ENCODE measurements at regions of chr1 and their contacts with region 1.

Region 1: GRCh38 chr1:93814059-93814794 is 64.8 kb downstream of the DNTTIP2 start:
- DNase-seq: peak; percentile 69
- ATAC-seq: peak; percentile 76
- H3K4me3 Mint-ChIP-seq: no peak overlapping the region
- H3K27ac Mint-ChIP-seq: no peak overlapping the region
- H3K4me1 Mint-ChIP-seq: peaks cover 17% of the 10 kb centered on the region
- H3K27me3 Mint-ChIP-seq: no peaks in the 10 kb centered on the region
- CTCF ChIP-seq: peak; percentile 84

Region 2: GRCh38 chr1:93437976-93438605 is 376.1 kb before region 1 on chr1:
- CTCF ChIA-PET with region 1: interaction called, 5 read pairs
- POLR2A ChIA-PET with region 1: no interaction called
- intact Hi-C with region 1: loop called (anchors 10 kb)
- DNase-seq: no peak
- ATAC-seq: peak; percentile 27
- H3K4me3 Mint-ChIP-seq: no peak overlapping the region
- H3K27ac Mint-ChIP-seq: no peak overlapping the region
- H3K4me1 Mint-ChIP-seq: no peaks in the 10 kb centered on the region
- H3K27me3 Mint-ChIP-seq: peaks cover 6% of the 10 kb centered on the region
- CTCF ChIP-seq: peak; percentile 66

Region 3: DNA sequence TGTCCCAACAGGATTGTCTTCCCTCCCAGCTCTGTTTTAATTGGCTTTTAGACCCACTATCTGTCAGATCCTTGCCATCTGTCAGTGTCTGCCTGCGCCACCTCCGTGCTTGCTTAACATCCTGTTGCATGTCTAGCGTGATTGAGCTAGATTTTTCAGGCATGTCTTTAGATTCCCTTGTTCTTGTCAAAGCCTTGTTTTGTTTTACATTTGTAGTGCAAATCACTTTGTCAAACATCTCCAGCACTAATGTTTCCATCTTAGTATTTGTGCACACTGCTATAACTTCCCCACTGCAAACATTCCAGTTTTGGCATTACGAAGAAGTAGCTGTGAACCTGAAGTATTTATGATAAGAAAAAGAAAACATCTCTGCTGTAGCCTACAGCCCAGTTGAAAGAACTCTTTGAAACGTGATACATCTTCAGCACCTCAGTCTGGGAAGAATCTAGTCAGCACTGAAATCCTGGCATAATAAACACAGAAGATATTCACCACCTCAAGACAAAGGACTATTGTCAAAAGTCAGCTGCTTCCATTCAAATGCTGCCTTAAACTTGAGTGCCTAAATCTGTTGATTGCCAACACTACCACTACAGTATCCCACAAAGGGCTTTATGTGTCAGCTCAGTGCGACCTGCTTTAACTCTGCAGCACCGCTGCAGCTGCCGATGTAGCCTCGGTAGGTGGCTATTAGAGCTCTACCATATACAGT is 261.3 kb before region 1 on chr1:
- CTCF ChIA-PET with region 1: no interaction called
- POLR2A ChIA-PET with region 1: no interaction called
- intact Hi-C with region 1: no loop called
- DNase-seq: no peak
- ATAC-seq: no peak
- H3K4me3 Mint-ChIP-seq: no peak overlapping the region
- H3K27ac Mint-ChIP-seq: no peak overlapping the region
- H3K4me1 Mint-ChIP-seq: peaks cover 8% of the 10 kb centered on the region
- H3K27me3 Mint-ChIP-seq: peaks cover 11% of the 10 kb centered on the region
- CTCF ChIP-seq: no peak

Region 4: GRCh38 chr1:93597709-93598108 is 216.5 kb before region 1 on chr1:
- CTCF ChIA-PET with region 1: no interaction called
- POLR2A ChIA-PET with region 1: no interaction called
- intact Hi-C with region 1: no loop called
- DNase-seq: no peak
- ATAC-seq: no peak
- H3K4me3 Mint-ChIP-seq: no peak overlapping the region
- H3K27ac Mint-ChIP-seq: no peak overlapping the region
- H3K4me1 Mint-ChIP-seq: no peaks in the 10 kb centered on the region
- H3K27me3 Mint-ChIP-seq: peaks cover 1% of the 10 kb centered on the region
- CTCF ChIP-seq: no peak

Region 5: GRCh38 chr1:93629099-93630059 is 184.8 kb before region 1 on chr1:
- CTCF ChIA-PET with region 1: interaction called, 293 read pairs
- POLR2A ChIA-PET with region 1: interaction called, 10 read pairs
- intact Hi-C with region 1: loop called (anchors 1 kb)
- DNase-seq: peak; percentile 57
- ATAC-seq: peak; percentile 77
- H3K4me3 Mint-ChIP-seq: no peak overlapping the region
- H3K27ac Mint-ChIP-seq: no peak overlapping the region
- H3K4me1 Mint-ChIP-seq: no peaks in the 10 kb centered on the region
- H3K27me3 Mint-ChIP-seq: no peaks in the 10 kb centered on the region
- CTCF ChIP-seq: peak; percentile 90

Region 6: GRCh38 chr1:93672069-93672468 is 142.2 kb before region 1 on chr1:
- CTCF ChIA-PET with region 1: interaction called, 12 read pairs
- POLR2A ChIA-PET with region 1: no interaction called
- intact Hi-C with region 1: no loop called
- DNase-seq: no peak
- ATAC-seq: no peak
- H3K4me3 Mint-ChIP-seq: no peak overlapping the region
- H3K27ac Mint-ChIP-seq: no peak overlapping the region
- H3K4me1 Mint-ChIP-seq: no peaks in the 10 kb centered on the region
- H3K27me3 Mint-ChIP-seq: no peaks in the 10 kb centered on the region
- CTCF ChIP-seq: no peak

Region 7: GRCh38 chr1:93827633-93828366 is 13.6 kb after region 1 on chr1:
- CTCF ChIA-PET with region 1: interaction called, 24 read pairs
- POLR2A ChIA-PET with region 1: no interaction called
- intact Hi-C with region 1: no loop called
- DNase-seq: no peak
- ATAC-seq: no peak
- H3K4me3 Mint-ChIP-seq: no peak overlapping the region
- H3K27ac Mint-ChIP-seq: no peak overlapping the region
- H3K4me1 Mint-ChIP-seq: no peaks in the 10 kb centered on the region
- H3K27me3 Mint-ChIP-seq: no peaks in the 10 kb centered on the region
- CTCF ChIP-seq: no peak

Region 8: DNA sequence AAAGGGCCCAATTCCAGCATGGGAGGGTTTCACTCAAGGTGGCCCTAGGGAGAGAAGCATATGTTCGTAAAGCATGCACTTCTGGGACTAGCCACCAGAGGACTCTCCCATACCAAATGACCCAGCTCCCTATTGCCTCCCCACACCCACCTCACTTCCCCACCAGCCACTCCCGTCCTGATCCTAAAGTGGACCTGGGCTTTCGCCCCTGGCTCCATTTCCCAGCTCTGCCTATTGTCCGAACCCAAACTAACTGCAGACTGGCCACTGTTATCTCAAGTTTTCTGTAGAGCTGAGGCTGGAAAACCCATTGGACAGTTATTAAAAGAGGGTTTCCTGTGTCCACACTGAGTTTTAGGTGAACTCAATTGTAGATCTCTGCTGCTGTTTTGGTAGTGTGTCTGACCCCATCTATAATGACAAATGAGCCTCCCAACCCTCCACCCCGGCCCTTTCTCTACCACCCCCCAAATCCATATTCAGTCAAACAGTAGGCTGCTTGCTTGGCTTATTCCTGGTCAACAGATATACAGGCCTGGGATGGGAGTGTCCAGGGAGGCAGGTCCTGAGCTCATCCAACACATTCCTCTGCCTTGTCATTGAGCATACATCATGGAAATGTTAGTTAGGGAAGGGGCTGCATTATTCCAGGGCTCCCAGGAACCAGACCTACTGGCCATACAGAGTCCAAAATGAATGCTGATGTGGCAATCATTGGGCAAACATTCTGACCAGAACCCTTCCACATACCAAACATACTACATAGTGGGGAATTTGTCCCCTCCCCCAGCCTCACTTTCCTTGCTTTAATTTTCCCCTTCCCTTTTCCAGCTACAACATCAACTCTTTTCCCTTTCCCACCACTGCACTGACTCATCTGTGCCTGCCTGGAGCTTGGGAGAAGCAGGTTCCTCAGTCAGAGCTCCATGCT is 247.6 kb after region 1 on chr1:
- CTCF ChIA-PET with region 1: no interaction called
- POLR2A ChIA-PET with region 1: no interaction called
- intact Hi-C with region 1: no loop called
- DNase-seq: peak; percentile 67
- ATAC-seq: peak; percentile 85
- H3K4me3 Mint-ChIP-seq: no peak overlapping the region
- H3K27ac Mint-ChIP-seq: no peak overlapping the region
- H3K4me1 Mint-ChIP-seq: no peaks in the 10 kb centered on the region
- H3K27me3 Mint-ChIP-seq: peaks cover 4% of the 10 kb centered on the region
- CTCF ChIP-seq: peak; percentile 85